Heart right ventricle (tissue), 16 donors: ENCODE measurements at regions of chr13 and their contacts with region 1.

Region 1: GRCh38 chr13:30395192-30396084 is 26.9 kb upstream of the UBE2L5 start:
- DNase-seq: peak; percentile 81 to 85
- ATAC-seq: peak; percentile 73 to 94 (median 88)
- H3K4me3 ChIP-seq: peak overlapping the region; percentile 39 to 77 (median 56)
- H3K27ac ChIP-seq: peak overlapping the region; percentile 37 to 94 (median 72)
- H3K4me1 ChIP-seq: peaks cover 0 to 13% (median 5%) of the 10 kb centered on the region in 9 donors
- H3K27me3 ChIP-seq: no peaks in the 10 kb centered on the region
- CTCF ChIP-seq: no peak

Region 2: GRCh38 chr13:30364876-30365275 is 30.6 kb before region 1 on chr13:
- intact Hi-C with region 1: loop called in 1 of 10 experiments (anchors 5 kb)
- DNase-seq: peak in 1 of 2 donors; percentile 17
- ATAC-seq: peak in 4 of 8 donors; percentile 41 to 69 (median 68)
- H3K4me3 ChIP-seq: peak overlapping the region in 1 of 10 donors; percentile 10
- H3K27ac ChIP-seq: peak overlapping the region in 9 of 10 donors; percentile 38 to 82 (median 57)
- H3K4me1 ChIP-seq: peaks cover 0 to 42% (median 31%) of the 10 kb centered on the region in 9 donors
- H3K27me3 ChIP-seq: no peaks in the 10 kb centered on the region
- CTCF ChIP-seq: no peak